RWPE1 (cell line): ENCODE measurements at regions of chr17 and their contacts with region 1.

Region 1: DNA sequence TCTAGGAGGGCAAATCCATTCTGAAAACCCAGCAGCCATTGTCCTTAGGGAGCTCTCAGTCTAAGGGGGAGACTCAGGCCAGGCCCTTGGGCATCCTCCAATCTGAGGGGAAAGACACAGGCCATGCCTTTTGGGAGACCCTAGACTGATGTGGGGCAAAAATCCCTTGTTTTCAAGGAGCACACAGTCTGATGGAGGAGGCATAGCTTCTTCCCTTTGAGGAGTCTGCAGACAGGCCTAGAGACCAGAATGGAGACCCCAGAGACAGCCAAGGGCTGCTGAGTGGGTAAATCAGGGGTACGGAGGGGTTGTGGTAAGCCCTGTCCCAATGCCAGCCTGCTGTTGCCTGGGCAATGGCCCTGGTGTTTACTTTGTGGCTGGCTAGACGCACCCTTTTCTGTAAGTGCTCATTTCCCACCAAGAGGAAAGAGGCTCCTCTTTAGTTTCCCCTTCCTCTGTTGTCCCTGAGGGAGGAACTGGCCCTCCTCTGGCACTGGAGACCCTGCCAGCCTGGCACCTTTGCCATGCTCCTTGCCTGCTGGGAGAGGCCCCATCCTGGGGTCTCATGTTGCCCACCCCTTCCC is 19.3 kb downstream of the ARHGAP23 start:
- DNase-seq: no peak
- H3K27ac ChIP-seq: peak overlapping the region; percentile 99
- CTCF ChIP-seq: no peak

Region 2: GRCh38 chr17:38397227-38397626 is 50.4 kb before region 1 on chr17:
- CTCF ChIA-PET with region 1: no interaction called
- POLR2A ChIA-PET with region 1: no interaction called
- DNase-seq: no peak
- H3K27ac ChIP-seq: no peak overlapping the region
- CTCF ChIP-seq: no peak

Region 3: DNA sequence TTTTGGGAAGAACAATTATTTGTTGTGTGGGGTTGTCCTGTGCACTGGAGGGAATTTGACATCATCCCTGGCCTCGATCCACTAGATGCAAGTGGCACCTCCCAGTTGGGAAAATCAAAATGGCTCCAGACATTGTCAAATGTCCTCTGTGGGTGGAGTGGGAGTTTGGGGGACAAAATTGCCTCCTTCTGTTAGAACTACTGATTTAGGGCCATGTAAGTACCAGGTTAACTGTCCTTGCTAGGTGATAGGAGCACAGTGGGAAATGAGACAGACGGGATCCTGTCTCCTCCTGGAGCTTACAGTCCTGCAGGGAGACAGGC is 37.5 kb after region 1 on chr17:
- CTCF ChIA-PET with region 1: interaction called, 4 read pairs
- POLR2A ChIA-PET with region 1: interaction called, 12 read pairs
- DNase-seq: no peak
- H3K27ac ChIP-seq: peak overlapping the region; percentile 69
- CTCF ChIP-seq: peak; percentile 20

Region 4: DNA sequence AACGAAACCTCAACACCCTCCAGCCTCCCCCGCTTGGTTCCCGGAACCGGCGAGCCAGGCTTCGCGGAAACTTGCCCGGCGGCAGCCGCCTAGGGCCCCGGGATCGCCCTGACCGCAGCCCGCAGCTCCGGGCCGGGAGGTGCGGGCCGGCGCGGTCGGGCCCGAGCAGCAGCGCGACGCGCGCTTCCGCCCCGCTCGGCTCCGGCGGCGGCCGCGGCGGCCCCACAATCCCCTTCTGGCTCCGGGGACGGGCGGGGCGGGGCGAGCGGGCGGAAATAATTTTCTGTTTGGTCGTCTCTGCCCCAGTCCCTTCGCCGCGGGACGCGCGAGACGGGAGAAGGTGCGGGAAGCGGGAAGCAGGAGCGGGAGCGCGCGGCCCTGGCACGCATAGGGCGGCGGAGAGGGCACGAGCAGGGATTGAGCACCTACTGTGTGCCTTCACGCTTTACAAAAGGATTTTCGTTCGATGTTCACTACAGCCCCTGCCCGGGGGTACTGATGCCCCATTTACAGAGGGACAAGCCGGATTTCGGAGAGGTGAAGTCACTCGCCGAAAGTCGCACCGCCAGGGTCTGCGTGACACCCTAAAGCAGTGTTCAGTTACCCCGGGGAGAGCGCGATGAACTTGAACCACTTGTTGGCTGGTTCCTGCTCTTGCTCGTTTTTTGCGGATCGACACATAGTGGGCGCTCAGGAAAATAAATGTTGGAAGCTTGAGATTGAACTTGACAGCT is 254.7 kb after region 1 on chr17:
- CTCF ChIA-PET with region 1: no interaction called
- POLR2A ChIA-PET with region 1: no interaction called
- DNase-seq: peak; percentile 83
- H3K27ac ChIP-seq: peak overlapping the region; percentile 93
- CTCF ChIP-seq: no peak